ENCODE measurements at regions of chr18 and their contacts with region 1.

Region 1: GRCh38 chr18:54224379-54225014 is at the start of gene MBD2:
- DNase-seq: peak; percentile 96
- ATAC-seq: peak; percentile 91
- H3K4me3 Mint-ChIP-seq: peak within 1 kb of the TSS; percentile 94
- H3K27ac Mint-ChIP-seq: peak within 1 kb of the TSS; percentile 95
- H3K4me1 Mint-ChIP-seq: peaks cover 44% of the 10 kb centered on the region
- H3K27me3 Mint-ChIP-seq: no peaks in the 10 kb centered on the region
- CTCF ChIP-seq: no peak
- total RNA-seq, gene MBD2: 146 and 150 TPM in 2 replicates

Region 2: GRCh38 chr18:53526101-53526870 is 698.2 kb before region 1 on chr18:
- CTCF ChIA-PET with region 1: no interaction called
- POLR2A ChIA-PET with region 1: no interaction called
- intact Hi-C with region 1: no loop called
- DNase-seq: no peak
- ATAC-seq: no peak
- H3K4me3 Mint-ChIP-seq: no peak overlapping the region
- H3K27ac Mint-ChIP-seq: no peak overlapping the region
- H3K4me1 Mint-ChIP-seq: no peaks in the 10 kb centered on the region
- H3K27me3 Mint-ChIP-seq: no peaks in the 10 kb centered on the region
- CTCF ChIP-seq: no peak

Region 3: DNA sequence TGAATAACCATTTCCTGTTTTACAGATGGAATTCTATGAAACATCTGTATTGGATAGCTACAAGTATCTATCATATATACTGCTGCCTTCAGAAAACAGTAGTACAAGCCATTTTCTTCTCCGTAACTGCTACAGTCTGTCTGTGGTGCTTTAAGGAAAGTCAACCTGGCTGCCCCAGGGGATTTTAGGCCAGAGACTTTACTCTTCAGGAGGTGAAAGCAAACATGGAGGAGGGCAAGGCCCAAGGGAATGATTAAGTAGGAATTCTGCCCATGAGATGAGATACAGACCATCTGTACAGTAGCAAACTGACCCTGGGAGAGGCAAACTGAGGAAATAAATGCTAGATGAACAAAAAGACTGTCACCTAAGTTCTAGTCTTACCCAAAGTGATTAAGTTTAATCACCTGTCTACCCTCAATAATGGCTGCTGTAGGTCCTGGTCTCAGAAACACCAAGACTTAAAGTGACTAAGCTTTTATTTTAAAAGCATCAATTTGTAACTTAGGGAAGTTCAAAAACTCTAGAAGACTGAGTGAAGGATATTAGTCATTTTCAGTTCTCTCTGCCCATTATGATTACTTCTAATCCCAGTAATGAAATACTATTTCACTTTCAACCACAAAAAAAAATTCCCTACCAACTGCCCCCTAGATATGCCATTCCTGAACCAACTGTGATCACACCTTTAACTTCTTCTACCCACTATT is 14.9 kb before region 1 on chr18:
- CTCF ChIA-PET with region 1: interaction called, 10 read pairs
- POLR2A ChIA-PET with region 1: interaction called, 6 read pairs
- intact Hi-C with region 1: loop called (anchors 1 kb)
- DNase-seq: no peak
- ATAC-seq: peak; percentile 71
- H3K4me3 Mint-ChIP-seq: peak overlapping the region; percentile 58
- H3K27ac Mint-ChIP-seq: peak overlapping the region; percentile 78
- H3K4me1 Mint-ChIP-seq: peaks cover 71% of the 10 kb centered on the region
- H3K27me3 Mint-ChIP-seq: no peaks in the 10 kb centered on the region
- CTCF ChIP-seq: no peak

Region 4: DNA sequence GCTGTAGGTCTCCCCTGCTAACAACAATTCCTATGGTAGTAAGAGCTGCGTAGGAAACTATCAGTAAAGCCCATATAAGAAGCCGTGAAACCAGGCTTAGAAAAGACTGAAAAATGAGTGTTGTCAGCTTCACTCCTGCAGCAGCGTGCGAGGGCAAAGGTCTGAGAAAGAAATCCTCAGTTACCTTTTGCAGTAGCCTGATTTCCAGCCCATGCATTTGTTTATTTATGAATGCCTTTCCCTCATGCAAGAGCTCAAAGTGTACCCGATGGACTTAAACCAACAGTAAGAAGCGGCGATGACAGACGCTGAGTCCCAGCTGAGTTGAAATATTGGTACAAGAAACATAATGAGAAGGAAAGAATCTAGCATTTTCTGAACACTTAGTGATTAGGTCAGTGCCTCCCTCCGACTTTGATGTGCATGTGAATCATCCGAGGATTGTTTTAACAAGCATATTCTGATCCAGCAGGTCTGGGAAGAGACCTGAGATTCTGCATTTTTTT is 29.8 kb after region 1 on chr18:
- CTCF ChIA-PET with region 1: interaction called, 3 read pairs
- POLR2A ChIA-PET with region 1: interaction called, 19 read pairs
- intact Hi-C with region 1: loop called (anchors 1 kb)
- DNase-seq: no peak
- ATAC-seq: no peak
- H3K4me3 Mint-ChIP-seq: no peak overlapping the region
- H3K27ac Mint-ChIP-seq: no peak overlapping the region
- H3K4me1 Mint-ChIP-seq: peaks cover 36% of the 10 kb centered on the region
- H3K27me3 Mint-ChIP-seq: no peaks in the 10 kb centered on the region
- CTCF ChIP-seq: no peak

Region 5: GRCh38 chr18:54269893-54270844 is 45.7 kb after region 1 on chr18:
- CTCF ChIA-PET with region 1: interaction called, 94 read pairs
- POLR2A ChIA-PET with region 1: interaction called, 74 read pairs
- intact Hi-C with region 1: loop called (anchors 1 kb)
- DNase-seq: no peak
- ATAC-seq: peak; percentile 27
- H3K4me3 Mint-ChIP-seq: peak overlapping the region; percentile 95
- H3K27ac Mint-ChIP-seq: peak overlapping the region; percentile 99
- H3K4me1 Mint-ChIP-seq: peaks cover 31% of the 10 kb centered on the region
- H3K27me3 Mint-ChIP-seq: no peaks in the 10 kb centered on the region
- CTCF ChIP-seq: peak; percentile 46

Region 6: GRCh38 chr18:54357660-54358494 is 133.4 kb after region 1 on chr18 and contains the starts of genes C18orf54 and STARD6:
- CTCF ChIA-PET with region 1: interaction called, 3 read pairs
- POLR2A ChIA-PET with region 1: interaction called, 4 read pairs
- intact Hi-C with region 1: loop called (anchors 1 kb)
- DNase-seq: peak; percentile 89
- ATAC-seq: peak; percentile 95
- H3K4me3 Mint-ChIP-seq: peak within 1 kb of the TSS; percentile 99
- H3K27ac Mint-ChIP-seq: peak within 1 kb of the TSS; percentile 93
- H3K4me1 Mint-ChIP-seq: peaks cover 15% of the 10 kb centered on the region
- H3K27me3 Mint-ChIP-seq: no peaks in the 10 kb centered on the region
- CTCF ChIP-seq: no peak
- total RNA-seq, gene C18orf54: 1.9 TPM in 2 replicates
- total RNA-seq, gene STARD6: not detected in 2 replicates

Region 7: DNA sequence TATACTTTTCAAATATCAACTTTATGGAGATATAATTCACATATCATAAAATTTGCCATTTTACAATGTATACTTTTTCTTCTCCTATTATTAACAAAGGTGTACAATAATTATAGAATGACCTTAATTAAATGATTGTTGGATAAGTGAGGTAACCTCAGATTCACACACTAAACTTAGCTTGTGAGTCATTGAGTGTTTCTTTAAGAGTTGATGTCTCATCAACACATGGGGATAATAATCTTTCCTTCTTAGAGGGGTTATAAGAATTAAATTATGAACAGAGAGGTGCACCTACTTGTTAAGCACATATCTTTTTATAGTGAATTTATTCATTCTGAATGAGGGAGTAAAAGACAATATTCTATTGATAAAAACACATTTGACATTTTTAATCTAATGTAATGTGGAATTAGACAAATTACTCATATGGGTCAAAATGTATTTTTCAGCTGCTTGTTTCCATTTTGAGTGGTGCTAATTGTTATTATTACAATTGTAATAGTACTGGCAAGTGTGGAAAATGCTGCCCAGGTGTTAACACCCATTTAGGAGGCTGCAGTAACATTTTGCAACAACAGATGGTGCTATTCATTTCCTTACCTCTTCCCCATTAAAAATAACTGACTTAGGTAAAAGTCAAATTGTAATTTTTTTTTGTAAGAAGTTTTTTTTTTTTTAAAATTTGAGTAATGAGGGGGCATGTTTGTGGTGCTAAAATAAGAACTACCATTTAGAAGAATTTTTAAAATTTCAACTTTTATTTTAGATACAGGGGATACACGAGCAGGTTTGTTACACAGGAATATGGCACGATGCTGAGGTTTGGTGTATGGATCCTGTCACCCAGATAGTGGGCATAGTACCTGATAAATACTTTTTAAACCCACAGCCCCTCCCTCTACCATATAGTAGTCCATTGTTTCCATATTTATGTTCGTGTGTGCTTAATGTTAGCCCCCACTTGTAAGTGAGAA is 334.4 kb after region 1 on chr18:
- CTCF ChIA-PET with region 1: no interaction called
- POLR2A ChIA-PET with region 1: no interaction called
- intact Hi-C with region 1: loop called (anchors 5 kb)
- DNase-seq: no peak
- ATAC-seq: no peak
- H3K4me3 Mint-ChIP-seq: no peak overlapping the region
- H3K27ac Mint-ChIP-seq: no peak overlapping the region
- H3K4me1 Mint-ChIP-seq: no peaks in the 10 kb centered on the region
- H3K27me3 Mint-ChIP-seq: peaks cover 4% of the 10 kb centered on the region
- CTCF ChIP-seq: no peak